ENCODE measurements at regions of chrX and their contacts with region 1.

Region 1: DNA sequence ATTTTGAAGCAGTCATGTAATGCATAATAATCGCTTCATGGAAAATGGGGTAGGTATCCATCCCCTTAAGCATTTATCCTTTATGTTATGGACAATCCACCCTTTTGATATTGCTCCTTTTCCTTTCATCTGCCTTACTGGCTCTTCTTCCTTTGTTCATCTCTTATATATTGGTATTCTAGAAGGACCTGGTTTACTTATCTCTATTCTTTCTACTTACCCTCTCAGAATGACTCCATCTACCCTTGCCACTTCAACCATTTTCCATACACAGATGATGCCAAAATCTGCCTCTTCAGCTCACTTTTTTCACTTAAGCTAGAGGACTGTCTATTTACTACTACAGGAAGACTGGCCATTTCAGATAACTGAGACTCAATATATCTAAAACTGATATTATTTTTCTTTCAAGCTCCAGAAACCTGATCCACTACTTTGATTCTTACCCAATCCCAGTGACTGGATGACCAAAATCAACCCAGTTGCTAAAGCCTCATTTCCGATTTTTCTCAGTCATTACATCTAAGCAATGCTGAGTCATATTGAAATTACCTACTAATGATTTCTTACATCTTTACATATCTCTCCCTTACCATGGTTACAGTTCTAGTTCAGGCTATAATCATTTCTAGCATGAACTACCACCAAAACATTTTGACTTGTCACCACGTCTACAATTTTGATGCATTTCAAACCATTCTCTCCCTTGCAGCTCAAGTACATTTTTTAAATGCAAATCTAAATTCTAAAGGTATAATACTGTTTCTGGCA is 93.7 kb downstream of the FAAH2 start:
- DNase-seq: no peak
- ATAC-seq: peak; percentile 71
- H3K4me3 Mint-ChIP-seq: no peak overlapping the region
- H3K27ac Mint-ChIP-seq: peak overlapping the region; percentile 42
- H3K4me1 Mint-ChIP-seq: peaks cover 13% of the 10 kb centered on the region
- H3K27me3 Mint-ChIP-seq: no peaks in the 10 kb centered on the region

Region 2: GRCh38 chrX:57227691-57228090 is 152.5 kb before region 1 on chrX:
- CTCF ChIA-PET with region 1: no interaction called
- POLR2A ChIA-PET with region 1: no interaction called
- intact Hi-C with region 1: loop called in 1 of 2 experiments (anchors 5 kb)
- DNase-seq: peak; percentile 48
- ATAC-seq: peak; percentile 76
- H3K4me3 Mint-ChIP-seq: no peak overlapping the region
- H3K27ac Mint-ChIP-seq: no peak overlapping the region
- H3K4me1 Mint-ChIP-seq: no peaks in the 10 kb centered on the region
- H3K27me3 Mint-ChIP-seq: no peaks in the 10 kb centered on the region

Region 3: GRCh38 chrX:57364145-57364544 is 16.1 kb before region 1 on chrX:
- CTCF ChIA-PET with region 1: no interaction called
- POLR2A ChIA-PET with region 1: no interaction called
- intact Hi-C with region 1: loop called in 1 of 2 experiments (anchors 1 kb)
- DNase-seq: no peak
- ATAC-seq: no peak
- H3K4me3 Mint-ChIP-seq: no peak overlapping the region
- H3K27ac Mint-ChIP-seq: peak overlapping the region; percentile 0
- H3K4me1 Mint-ChIP-seq: peaks cover 10% of the 10 kb centered on the region
- H3K27me3 Mint-ChIP-seq: no peaks in the 10 kb centered on the region